H1 (cell line): ENCODE measurements at regions of chr1 and their contacts with region 1.

Region 1: DNA sequence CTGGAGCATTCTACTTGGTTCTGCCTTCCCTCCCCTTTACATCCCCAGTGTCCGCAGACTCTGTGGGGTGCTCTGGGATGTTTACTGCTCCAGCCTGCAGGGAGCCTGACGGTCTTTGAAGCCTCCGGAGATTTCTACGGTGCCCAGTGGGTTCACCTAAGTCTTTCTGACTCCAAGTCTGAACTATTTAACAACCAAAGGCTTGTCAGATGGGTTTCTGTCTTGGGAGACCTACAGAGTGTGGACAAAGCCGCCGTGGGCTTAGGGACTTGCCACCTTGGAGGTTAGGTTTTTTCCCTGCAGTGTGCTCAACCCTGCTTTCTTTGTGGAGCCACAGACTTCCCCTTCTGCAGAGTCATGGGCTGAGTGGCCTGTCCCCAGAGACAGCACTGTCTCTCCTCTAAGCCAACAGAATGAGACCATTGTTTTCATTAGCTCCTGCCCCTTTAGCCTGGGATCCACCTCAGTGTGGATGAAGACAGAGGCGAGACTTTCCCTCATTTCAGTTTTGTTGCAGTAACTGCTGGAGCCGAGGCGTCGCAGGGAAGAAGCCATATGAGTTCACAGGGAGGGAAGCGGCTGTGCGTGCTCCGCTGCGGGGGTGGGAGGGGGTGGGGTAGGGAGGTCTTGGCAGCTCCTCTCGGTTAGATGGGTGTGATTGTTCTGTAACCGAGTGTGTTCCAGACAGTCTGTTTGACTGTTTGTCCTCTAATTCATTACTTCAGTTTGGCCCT is 120.7 kb downstream of the CNIH3 start:
- DNase-seq: no peak
- H3K4me3 ChIP-seq: no peak overlapping the region
- H3K27ac ChIP-seq: no peak overlapping the region
- H3K4me1 ChIP-seq: peaks cover 12 to 26% (median 13%) of the 10 kb centered on the region in 4 experiments
- H3K27me3 ChIP-seq: peaks cover 0 to 2% (median 0%) of the 10 kb centered on the region in 4 experiments; a peak in 1 of 7 replicates
- CTCF ChIP-seq: no peak
- EP300 ChIP-seq: no peak
- POLR2A ChIP-seq: no peak
- RAD21 ChIP-seq: no peak

Region 2: GRCh38 chr1:224137518-224137917 is 599.3 kb before region 1 on chr1:
- CTCF ChIA-PET with region 1: no interaction called
- POLR2A ChIA-PET with region 1: no interaction called
- DNase-seq: no peak
- H3K4me3 ChIP-seq: no peak overlapping the region
- H3K27ac ChIP-seq: no peak overlapping the region
- H3K4me1 ChIP-seq: no peaks in the 10 kb centered on the region
- H3K27me3 ChIP-seq: no peaks in the 10 kb centered on the region
- CTCF ChIP-seq: no peak
- EP300 ChIP-seq: no peak
- POLR2A ChIP-seq: no peak
- RAD21 ChIP-seq: no peak

Region 3: DNA sequence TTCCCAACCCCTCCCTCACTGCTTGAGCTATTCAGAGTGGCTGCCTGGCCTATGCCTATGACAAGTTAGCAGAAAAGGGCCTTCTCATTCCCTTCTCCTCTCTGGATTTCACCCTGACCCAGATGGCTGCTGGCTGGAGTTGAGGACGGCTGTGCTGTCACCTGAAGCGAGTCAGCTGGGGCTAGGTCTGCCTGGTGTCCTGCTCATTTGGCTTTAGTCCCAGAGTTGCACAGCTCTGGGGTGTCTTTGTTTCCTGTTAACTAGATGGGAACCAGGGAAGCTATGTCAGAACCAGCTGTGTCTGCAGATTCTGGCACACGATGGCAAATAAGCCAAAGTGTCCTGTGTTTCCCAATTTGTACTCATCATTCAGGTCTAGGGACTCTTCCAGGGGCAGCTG is 67.8 kb before region 1 on chr1:
- CTCF ChIA-PET with region 1: no interaction called
- POLR2A ChIA-PET with region 1: no interaction called
- DNase-seq: no peak
- H3K4me3 ChIP-seq: no peak overlapping the region
- H3K27ac ChIP-seq: no peak overlapping the region
- H3K4me1 ChIP-seq: no peaks in the 10 kb centered on the region; a peak in 1 of 7 replicates
- H3K27me3 ChIP-seq: no peaks in the 10 kb centered on the region
- CTCF ChIP-seq: no peak
- EP300 ChIP-seq: no peak
- POLR2A ChIP-seq: no peak
- RAD21 ChIP-seq: no peak

Region 4: DNA sequence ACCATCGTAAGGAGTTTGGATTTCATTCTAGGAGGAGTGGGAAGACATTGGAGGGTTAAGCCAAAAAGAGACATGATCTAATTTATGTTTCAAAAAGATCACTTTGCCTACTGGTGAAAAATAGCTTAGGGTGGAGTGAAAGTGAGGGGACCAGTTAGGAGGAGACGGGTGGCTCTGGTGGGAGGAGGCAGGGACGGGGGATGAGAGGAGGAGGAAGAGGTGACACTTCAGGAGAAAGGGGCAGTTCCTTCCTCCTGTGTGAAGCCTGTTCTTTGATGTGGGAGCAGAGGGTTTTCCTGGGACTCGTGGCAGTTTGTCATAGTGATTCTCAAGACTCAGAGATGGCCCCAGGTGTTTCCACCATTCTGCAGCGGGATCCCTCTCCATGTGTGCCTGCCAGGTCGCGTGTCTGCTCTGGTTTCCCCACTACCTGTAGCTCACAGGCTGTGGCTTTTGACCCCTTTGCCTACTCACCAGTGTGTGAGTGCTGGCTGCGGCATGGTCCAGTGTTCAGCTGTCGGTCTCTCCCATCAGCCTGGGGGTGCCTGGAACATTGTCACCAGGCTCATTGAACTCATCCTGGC is 18.2 kb before region 1 on chr1:
- CTCF ChIA-PET with region 1: interaction called, 10 read pairs
- POLR2A ChIA-PET with region 1: no interaction called
- DNase-seq: no peak
- H3K4me3 ChIP-seq: no peak overlapping the region
- H3K27ac ChIP-seq: no peak overlapping the region
- H3K4me1 ChIP-seq: 0 out of 7 replicates have a peak, but pooled peaks cover 0 to 3% (median 0%) of the 10 kb centered on the region in 4 experiments
- H3K27me3 ChIP-seq: no peaks in the 10 kb centered on the region
- CTCF ChIP-seq: no peak
- EP300 ChIP-seq: no peak
- POLR2A ChIP-seq: no peak
- RAD21 ChIP-seq: no peak

Region 5: GRCh38 chr1:224753491-224753890 is 16.7 kb after region 1 on chr1:
- CTCF ChIA-PET with region 1: interaction called, 11 read pairs
- POLR2A ChIA-PET with region 1: no interaction called
- DNase-seq: no peak
- H3K4me3 ChIP-seq: no peak overlapping the region
- H3K27ac ChIP-seq: no peak overlapping the region
- H3K4me1 ChIP-seq: peaks cover 0 to 5% (median 2%) of the 10 kb centered on the region in 4 experiments; a peak in 4 of 7 replicates
- H3K27me3 ChIP-seq: no peaks in the 10 kb centered on the region
- CTCF ChIP-seq: no peak
- EP300 ChIP-seq: no peak
- POLR2A ChIP-seq: no peak
- RAD21 ChIP-seq: no peak